Dorsolateral prefrontal cortex (tissue), 120 donors: ENCODE measurements at regions of chr2 and their contacts with region 1.

Region 1: GRCh38 chr2:231612179-231613053 is 19.8 kb downstream of the TEX44 start:
- DNase-seq: peak; percentile 85 to 94 (median 92)
- H3K4me3 ChIP-seq: peak overlapping the region in 17 of 59 donors; percentile 8 to 79 (median 66)
- H3K27ac ChIP-seq: peak overlapping the region; percentile 95 to 100 (median 100)
- H3K27me3 ChIP-seq: no peaks in the 10 kb centered on the region
- CTCF ChIP-seq: peak; percentile 87 to 100 (median 98)

Region 2: GRCh38 chr2:231662028-231662810 is 49.8 kb after region 1 on chr2:
- intact Hi-C with region 1: loop called (anchors 1 kb)
- DNase-seq: peak; percentile 85 to 96 (median 94)
- H3K4me3 ChIP-seq: peak overlapping the region; percentile 13 to 84 (median 61)
- H3K27ac ChIP-seq: peak overlapping the region; percentile 92 to 100 (median 99)
- H3K27me3 ChIP-seq: no peaks in the 10 kb centered on the region
- CTCF ChIP-seq: peak in 37 of 56 donors; percentile 8 to 63 (median 35)

Region 3: GRCh38 chr2:231674587-231675338 is 62.3 kb after region 1 on chr2:
- intact Hi-C with region 1: loop called in 1 of 2 experiments (anchors 1 kb)
- DNase-seq: peak in 9 of 10 donors; percentile 58 to 79 (median 69)
- H3K4me3 ChIP-seq: peak overlapping the region in 5 of 59 donors; percentile 8 to 12 (median 9)
- H3K27ac ChIP-seq: peak overlapping the region; percentile 67 to 100 (median 91)
- H3K27me3 ChIP-seq: no peaks in the 10 kb centered on the region
- CTCF ChIP-seq: peak; percentile 65 to 95 (median 86)

Region 4: GRCh38 chr2:231680992-231681853 is 68.8 kb after region 1 on chr2:
- intact Hi-C with region 1: loop called in 1 of 2 experiments (anchors 5 kb)
- DNase-seq: peak; percentile 73 to 91 (median 80)
- H3K4me3 ChIP-seq: peak overlapping the region; percentile 32 to 74 (median 61)
- H3K27ac ChIP-seq: peak overlapping the region; percentile 93 to 100 (median 98)
- H3K27me3 ChIP-seq: no peaks in the 10 kb centered on the region
- CTCF ChIP-seq: peak in 16 of 56 donors; percentile 6 to 47 (median 15)

Region 5: DNA sequence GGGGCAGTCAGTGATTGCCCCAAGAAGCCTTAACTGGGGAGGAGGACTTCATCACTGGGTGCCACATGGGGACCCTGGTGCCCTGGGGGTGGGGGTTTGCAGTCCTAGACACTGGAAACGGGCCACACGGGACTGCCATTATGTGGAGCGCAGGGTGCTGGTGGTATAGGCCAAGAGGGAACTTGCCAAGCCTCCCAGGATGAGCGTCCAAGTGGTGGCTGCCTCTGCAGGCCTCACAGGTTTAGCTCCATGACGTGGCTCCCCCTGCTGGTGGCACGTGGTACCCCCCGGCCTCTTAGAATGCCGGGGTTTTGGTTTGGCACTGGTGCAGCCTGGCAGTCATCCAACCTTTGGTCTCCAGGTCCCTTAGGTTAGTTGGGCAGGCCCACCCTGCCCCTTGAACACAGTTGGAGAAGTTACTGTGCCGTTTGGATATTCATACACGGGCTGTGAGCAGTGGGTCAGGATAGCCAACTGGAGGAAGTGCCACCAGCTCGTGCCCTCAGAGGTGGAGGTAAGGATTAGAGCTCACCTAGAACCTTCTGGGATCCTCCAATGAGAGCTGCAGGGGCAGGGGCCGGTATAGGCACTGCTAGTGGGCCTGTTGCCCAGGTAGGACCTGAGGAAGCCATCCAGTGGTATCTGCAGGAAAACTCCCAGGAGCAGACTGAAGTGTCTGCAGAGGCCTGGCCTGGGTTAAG is 101.5 kb after region 1 on chr2:
- intact Hi-C with region 1: loop called (anchors 1 to 2 kb)
- DNase-seq: peak; percentile 67 to 83 (median 82)
- H3K4me3 ChIP-seq: peak overlapping the region in 17 of 59 donors; percentile 1 to 37 (median 13)
- H3K27ac ChIP-seq: peak overlapping the region in 58 of 59 donors; percentile 30 to 100 (median 74)
- H3K27me3 ChIP-seq: no peaks in the 10 kb centered on the region
- CTCF ChIP-seq: peak; percentile 66 to 99 (median 94)

Region 6: GRCh38 chr2:231780909-231781797 is 168.7 kb after region 1 on chr2 and contains the start of gene PDE6D:
- intact Hi-C with region 1: loop called in 1 of 2 experiments (anchors 5 kb)
- DNase-seq: peak; percentile 97 to 99 (median 98)
- H3K4me3 ChIP-seq: peak within 1 kb of the TSS; percentile 67 to 100 (median 92)
- H3K27ac ChIP-seq: peak within 1 kb of the TSS; percentile 63 to 97 (median 93)
- H3K27me3 ChIP-seq: no peaks in the 10 kb centered on the region
- CTCF ChIP-seq: peak in 22 of 56 donors; percentile 5 to 58 (median 22)
- total RNA-seq, gene PDE6D: 26.1 to 44.6 (median 33.3) TPM

Region 7: DNA sequence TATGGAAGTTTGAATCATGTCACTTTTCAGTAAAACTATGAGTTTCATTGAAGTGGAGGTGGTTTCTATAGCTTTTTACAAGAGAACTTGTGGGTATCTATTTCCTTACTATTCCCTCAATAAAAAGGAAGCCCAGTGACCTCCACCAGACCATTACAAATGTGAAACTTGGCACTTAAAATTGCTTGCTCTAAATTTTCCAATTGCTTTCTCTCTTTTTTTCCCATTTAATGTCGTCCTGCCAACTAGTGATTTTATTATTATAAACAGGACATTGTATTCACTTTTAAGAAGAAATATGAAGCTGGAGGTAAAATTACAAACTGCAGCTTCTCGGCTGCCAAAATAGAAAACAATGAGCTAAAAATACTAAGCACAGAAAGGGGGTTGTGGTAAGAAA is 558.0 kb after region 1 on chr2:
- intact Hi-C with region 1: no loop called
- DNase-seq: no peak
- H3K4me3 ChIP-seq: no peak overlapping the region
- H3K27ac ChIP-seq: peak overlapping the region in 2 of 59 donors; percentile 5 to 36
- H3K27me3 ChIP-seq: no peaks in the 10 kb centered on the region
- CTCF ChIP-seq: no peak